CD14-positive monocyte (primary cell): ENCODE measurements at regions of chr2 and their contacts with region 1.

Region 1: DNA sequence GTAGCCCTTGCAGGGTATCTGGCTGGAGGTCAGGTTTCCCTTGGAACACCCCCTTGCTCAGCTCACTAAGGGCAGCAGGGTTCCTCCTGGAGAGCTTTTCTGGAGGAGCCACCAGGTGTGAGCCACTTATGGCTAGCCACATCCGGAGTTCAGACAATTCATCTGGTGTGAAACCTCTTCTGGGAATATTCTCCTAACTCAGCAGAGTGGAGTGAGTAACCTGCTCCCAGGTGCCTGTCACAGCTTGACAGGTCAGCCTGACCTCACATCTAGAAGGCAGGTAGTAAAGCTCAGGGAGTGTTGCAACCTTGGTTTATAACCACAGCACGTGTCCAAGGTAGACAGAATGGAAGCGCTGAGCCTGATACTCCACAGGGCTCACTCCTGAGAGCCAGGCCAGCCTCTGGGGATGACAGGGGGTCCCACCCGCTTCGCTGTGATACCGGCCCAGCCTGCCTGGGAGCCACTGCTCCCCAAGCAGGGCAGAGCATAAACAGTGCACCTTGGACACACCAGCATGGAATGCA is 62.6 kb upstream of the TGFA start:
- DNase-seq: no peak
- H3K4me3 ChIP-seq: no peak overlapping the region
- H3K4me3 Mint-ChIP-seq: no peak overlapping the region
- H3K27ac ChIP-seq: no peak overlapping the region
- H3K27ac Mint-ChIP-seq: no peak overlapping the region
- H3K4me1 ChIP-seq: no peaks in the 10 kb centered on the region
- H3K4me1 Mint-ChIP-seq: peaks cover 2% of the 10 kb centered on the region
- H3K27me3 ChIP-seq: no peaks in the 10 kb centered on the region
- H3K27me3 Mint-ChIP-seq: peaks cover 4 to 19% (median 17%) of the 10 kb centered on the region in 3 donors
- CTCF ChIP-seq: no peak

Region 2: GRCh38 chr2:70340921-70341765 is 275.1 kb before region 1 on chr2:
- intact Hi-C with region 1: loop called (anchors 1 to 2 kb)
- DNase-seq: peak; percentile 15 to 48 (median 41)
- H3K4me3 ChIP-seq: no peak overlapping the region
- H3K4me3 Mint-ChIP-seq: no peak overlapping the region
- H3K27ac ChIP-seq: no peak overlapping the region
- H3K27ac Mint-ChIP-seq: no peak overlapping the region
- H3K4me1 ChIP-seq: no peaks in the 10 kb centered on the region
- H3K4me1 Mint-ChIP-seq: no peaks in the 10 kb centered on the region
- H3K27me3 ChIP-seq: peaks cover 0 to 2% of the 10 kb centered on the region in 2 donors
- H3K27me3 Mint-ChIP-seq: peaks cover 2 to 16% (median 5%) of the 10 kb centered on the region in 3 donors
- CTCF ChIP-seq: peak; percentile 91

Region 3: GRCh38 chr2:70412294-70413070 is 203.7 kb before region 1 on chr2:
- intact Hi-C with region 1: no loop called
- DNase-seq: no peak
- H3K4me3 ChIP-seq: no peak overlapping the region
- H3K4me3 Mint-ChIP-seq: no peak overlapping the region
- H3K27ac ChIP-seq: no peak overlapping the region
- H3K27ac Mint-ChIP-seq: no peak overlapping the region
- H3K4me1 ChIP-seq: no peaks in the 10 kb centered on the region
- H3K4me1 Mint-ChIP-seq: no peaks in the 10 kb centered on the region
- H3K27me3 ChIP-seq: no peaks in the 10 kb centered on the region
- H3K27me3 Mint-ChIP-seq: peaks cover 6 to 11% (median 7%) of the 10 kb centered on the region in 3 donors
- CTCF ChIP-seq: no peak

Region 4: DNA sequence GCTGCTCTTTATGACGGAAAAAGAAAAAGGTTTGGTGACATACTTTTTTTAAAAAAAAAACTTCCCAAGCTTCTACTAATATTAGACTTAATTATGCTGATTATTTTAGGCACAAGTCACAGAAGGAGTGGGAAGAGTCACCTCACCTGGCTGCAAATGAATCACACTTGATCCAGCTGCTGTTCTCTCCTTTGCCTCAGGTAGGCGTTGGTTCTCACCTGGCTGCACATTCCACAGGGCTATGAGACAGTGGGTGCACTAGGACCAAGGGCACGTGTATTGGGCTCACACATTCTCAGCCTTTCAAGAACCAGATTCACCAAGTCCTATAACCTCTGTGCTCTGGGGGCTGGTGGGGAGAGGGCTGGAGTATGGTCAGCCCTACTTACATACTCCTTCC is 155.9 kb before region 1 on chr2:
- intact Hi-C with region 1: no loop called
- DNase-seq: no peak
- H3K4me3 ChIP-seq: no peak overlapping the region
- H3K4me3 Mint-ChIP-seq: no peak overlapping the region
- H3K27ac ChIP-seq: no peak overlapping the region
- H3K27ac Mint-ChIP-seq: no peak overlapping the region
- H3K4me1 ChIP-seq: no peaks in the 10 kb centered on the region
- H3K4me1 Mint-ChIP-seq: no peaks in the 10 kb centered on the region
- H3K27me3 ChIP-seq: no peaks in the 10 kb centered on the region
- H3K27me3 Mint-ChIP-seq: peaks cover 0 to 3% (median 2%) of the 10 kb centered on the region in 3 donors
- CTCF ChIP-seq: no peak